ENCODE measurements at regions of chrX and their contacts with region 1.

Region 1: GRCh38 chrX:97692575-97692974 is 808.9 kb downstream of the RPA4 start:
- DNase-seq: no peak
- ATAC-seq: no peak
- H3K4me3 ChIP-seq: no peak overlapping the region
- H3K27ac ChIP-seq: no peak overlapping the region
- H3K4me1 ChIP-seq: no peaks in the 10 kb centered on the region
- H3K27me3 ChIP-seq: no peaks in the 10 kb centered on the region
- CTCF ChIP-seq: no peak

Region 2: DNA sequence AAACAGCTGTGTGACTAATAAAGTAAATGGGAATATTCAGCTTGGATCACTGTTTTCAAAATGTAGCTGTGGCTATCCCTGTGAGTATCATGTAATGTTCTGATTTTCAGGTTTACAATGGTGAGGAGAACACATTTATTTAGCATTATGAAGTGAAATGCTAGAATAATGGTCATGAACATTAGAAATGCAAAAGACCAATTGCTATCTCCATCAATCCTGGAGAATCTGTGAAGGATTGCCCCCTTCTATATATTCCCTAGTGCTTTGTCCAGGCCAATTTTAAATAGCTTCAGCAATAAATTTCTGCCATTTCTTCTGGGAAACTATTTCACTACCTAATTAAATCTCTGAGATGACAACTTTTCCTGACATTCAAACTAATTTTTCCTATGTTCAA is 1318.4 kb after region 1 on chrX:
- CTCF ChIA-PET with region 1: no interaction called
- POLR2A ChIA-PET with region 1: interaction called, 25 read pairs
- in situ Hi-C with region 1: no loop called
- intact Hi-C with region 1: no loop called
- DNase-seq: no peak
- ATAC-seq: no peak
- H3K4me3 ChIP-seq: no peak overlapping the region
- H3K27ac ChIP-seq: no peak overlapping the region
- H3K4me1 ChIP-seq: no peaks in the 10 kb centered on the region
- H3K27me3 ChIP-seq: no peaks in the 10 kb centered on the region
- CTCF ChIP-seq: no peak